ENCODE measurements at regions of chr2 and their contacts with region 1.

Region 1: GRCh38 chr2:113173542-113174395 is at the start of gene PSD4:
- DNase-seq: peak; percentile 86
- H3K4me3 Mint-ChIP-seq: peak within 1 kb of the TSS; percentile 89
- H3K27ac Mint-ChIP-seq: peak within 1 kb of the TSS; percentile 93
- H3K4me1 Mint-ChIP-seq: peaks cover 72% of the 10 kb centered on the region
- H3K27me3 Mint-ChIP-seq: peaks cover 3% of the 10 kb centered on the region
- total RNA-seq, gene PSD4: 249 and 257 TPM in 2 replicates

Region 2: DNA sequence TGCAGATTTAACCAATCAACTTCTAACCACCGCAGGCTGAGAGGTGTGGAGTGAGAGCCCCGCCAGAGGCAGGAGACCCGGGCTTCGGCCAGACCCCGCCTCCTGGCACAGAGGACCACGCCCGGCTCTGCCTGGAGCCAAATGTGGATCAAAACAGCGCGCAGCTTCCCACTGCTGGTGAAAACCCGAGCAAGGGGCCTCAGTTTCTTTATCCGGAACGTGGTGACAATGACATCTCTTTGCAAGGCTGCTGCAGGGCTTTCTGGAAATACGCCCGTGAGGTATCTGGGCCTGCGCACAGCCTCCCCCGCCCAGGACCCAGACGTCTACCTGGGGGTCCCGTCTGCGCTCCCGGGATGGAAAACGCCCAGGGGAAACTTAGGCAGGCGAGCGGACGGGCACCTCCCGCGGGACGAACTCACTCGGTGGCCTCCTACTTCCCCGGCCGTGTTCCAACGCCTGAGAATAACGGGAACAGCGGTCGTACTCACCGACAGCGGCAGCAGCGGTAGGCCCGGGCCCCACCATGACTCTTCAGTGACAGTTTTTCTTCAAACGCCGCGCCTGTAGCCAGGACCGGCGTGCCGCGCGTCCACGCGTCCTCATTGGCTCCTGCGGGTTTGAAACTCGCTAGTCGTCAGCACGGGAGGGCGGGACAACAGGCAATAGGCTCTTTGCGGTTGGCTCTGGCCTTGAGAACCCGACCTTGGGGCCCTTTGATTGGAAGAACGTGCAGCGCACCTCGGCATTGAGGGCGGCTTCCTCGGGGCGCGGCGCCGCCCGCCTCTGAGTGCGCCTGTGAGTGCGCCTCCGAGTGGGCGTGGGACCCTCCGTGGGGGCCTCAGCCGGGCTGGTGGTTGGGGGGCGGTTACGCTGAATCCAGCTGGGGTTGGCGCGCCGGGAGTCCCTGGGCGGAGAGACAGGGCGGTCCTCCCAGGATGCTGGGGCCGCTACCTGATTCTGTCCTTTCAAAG is 409.4 kb before region 1 on chr2 and contains the start of gene CKAP2L:
- intact Hi-C with region 1: loop called (anchors 1 kb)
- DNase-seq: peak; percentile 95
- H3K4me3 Mint-ChIP-seq: peak within 1 kb of the TSS; percentile 95
- H3K27ac Mint-ChIP-seq: peak within 1 kb of the TSS; percentile 93
- H3K4me1 Mint-ChIP-seq: peaks cover 50% of the 10 kb centered on the region
- H3K27me3 Mint-ChIP-seq: no peaks in the 10 kb centered on the region
- total RNA-seq, gene CKAP2L: 20.9 and 21.2 TPM in 2 replicates

Region 3: DNA sequence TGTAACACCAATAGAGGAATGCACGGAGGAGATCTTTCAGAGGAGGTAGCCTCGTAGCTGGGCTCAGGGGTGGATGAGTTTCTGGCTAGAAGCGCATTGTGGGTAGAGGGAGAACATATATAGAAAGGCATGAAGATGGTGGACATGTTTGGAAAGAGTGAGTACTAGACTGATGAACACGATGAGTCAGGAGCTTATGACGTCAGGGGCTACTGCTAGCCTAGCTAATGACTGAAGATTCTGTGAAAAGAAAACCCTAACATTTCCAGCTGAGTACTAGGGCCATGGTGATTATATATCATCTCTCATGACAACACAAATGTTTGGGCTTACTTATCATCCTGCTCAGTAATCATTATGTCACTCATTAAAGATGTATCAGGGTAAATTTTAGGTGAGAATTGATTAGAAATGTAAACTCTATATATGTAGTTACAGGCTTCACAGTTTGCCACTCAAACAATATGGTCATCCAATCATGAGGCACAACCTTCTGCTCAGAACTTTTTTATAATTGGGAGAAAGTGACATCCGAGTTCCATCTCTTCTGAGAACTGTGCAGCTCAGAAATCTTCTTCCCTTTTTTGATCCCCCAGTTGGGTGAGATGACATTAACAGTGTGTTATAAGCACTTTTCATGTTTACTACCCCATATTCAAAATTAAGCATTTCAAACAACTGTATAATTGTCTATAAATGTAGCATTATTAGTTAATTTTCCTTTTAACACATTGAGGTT is 68.6 kb before region 1 on chr2:
- intact Hi-C with region 1: loop called (anchors 2 kb)
- DNase-seq: no peak
- H3K4me3 Mint-ChIP-seq: peak overlapping the region; percentile 0
- H3K27ac Mint-ChIP-seq: peak overlapping the region; percentile 96
- H3K4me1 Mint-ChIP-seq: peaks cover 65% of the 10 kb centered on the region
- H3K27me3 Mint-ChIP-seq: peaks cover 2% of the 10 kb centered on the region

Region 4: DNA sequence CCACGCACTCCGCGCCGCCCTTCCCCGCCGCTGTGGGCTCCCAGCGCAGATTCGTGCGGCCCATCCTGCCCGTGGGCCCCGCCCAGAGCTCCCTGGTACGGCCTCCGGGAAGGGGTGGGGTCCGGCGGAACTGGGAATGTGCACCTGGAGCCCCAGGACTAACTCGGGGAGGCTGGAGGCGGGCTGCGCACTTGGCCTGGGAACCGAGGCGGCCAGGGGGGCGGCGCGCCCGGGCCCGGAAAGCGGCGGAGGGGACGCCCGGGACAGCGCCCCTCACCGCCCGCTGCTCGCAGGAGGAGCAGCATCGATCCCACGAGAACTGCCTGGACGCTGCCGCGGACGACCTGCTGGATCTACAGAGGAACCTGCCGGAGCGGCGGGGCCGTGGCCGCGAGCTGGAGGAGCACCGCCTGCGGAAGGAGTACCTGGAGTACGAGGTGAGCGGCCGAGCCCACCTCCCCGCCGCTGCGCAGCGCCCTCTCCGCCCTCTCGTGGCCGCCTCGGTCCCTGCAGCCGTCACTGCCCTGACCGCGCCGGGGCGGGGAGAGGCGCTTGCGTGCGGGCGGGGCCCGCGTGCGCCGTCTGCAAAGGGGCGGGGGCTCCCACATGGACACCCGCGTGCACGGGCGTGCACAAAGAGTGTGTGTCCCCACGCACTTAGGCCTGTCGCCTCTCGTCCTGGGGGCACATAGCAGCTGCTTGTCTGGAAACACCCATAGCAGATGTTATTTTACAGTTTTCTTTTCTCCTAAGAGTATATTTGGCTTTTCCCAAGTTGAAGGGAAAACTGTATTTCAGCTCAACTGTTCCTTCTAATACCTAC is 25.2 kb after region 1 on chr2:
- intact Hi-C with region 1: loop called (anchors 1 kb)
- DNase-seq: peak; percentile 70
- H3K4me3 Mint-ChIP-seq: no peak overlapping the region
- H3K27ac Mint-ChIP-seq: peak overlapping the region; percentile 40
- H3K4me1 Mint-ChIP-seq: peaks cover 45% of the 10 kb centered on the region
- H3K27me3 Mint-ChIP-seq: no peaks in the 10 kb centered on the region

Region 5: GRCh38 chr2:113889471-113890252 is 715.9 kb after region 1 on chr2 and contains the start of gene ACTR3:
- intact Hi-C with region 1: loop called (anchors 5 kb)
- DNase-seq: peak; percentile 99
- H3K4me3 Mint-ChIP-seq: peak within 1 kb of the TSS; percentile 100
- H3K27ac Mint-ChIP-seq: peak within 1 kb of the TSS; percentile 99
- H3K4me1 Mint-ChIP-seq: peaks cover 84% of the 10 kb centered on the region
- H3K27me3 Mint-ChIP-seq: no peaks in the 10 kb centered on the region
- total RNA-seq, gene ACTR3: 440 and 451 TPM in 2 replicates

Measured in activated T-helper 1 cell treated with anti-CD3 and anti-CD28 coated beads, Interleukin-12 subunit alpha, Interleukin-12 subunit beta, Interleukin-2, Interleukin-4 antibody, amounts not matched to agents 30 ng/mL and 10 ng/mL and 1 ng/mL, durations not matched to agents 14 hours and 24 hours and 36 hours (primary cell).